WTC11 (cell line): ENCODE measurements at regions of chr19 and their contacts with region 1.

Region 1: DNA sequence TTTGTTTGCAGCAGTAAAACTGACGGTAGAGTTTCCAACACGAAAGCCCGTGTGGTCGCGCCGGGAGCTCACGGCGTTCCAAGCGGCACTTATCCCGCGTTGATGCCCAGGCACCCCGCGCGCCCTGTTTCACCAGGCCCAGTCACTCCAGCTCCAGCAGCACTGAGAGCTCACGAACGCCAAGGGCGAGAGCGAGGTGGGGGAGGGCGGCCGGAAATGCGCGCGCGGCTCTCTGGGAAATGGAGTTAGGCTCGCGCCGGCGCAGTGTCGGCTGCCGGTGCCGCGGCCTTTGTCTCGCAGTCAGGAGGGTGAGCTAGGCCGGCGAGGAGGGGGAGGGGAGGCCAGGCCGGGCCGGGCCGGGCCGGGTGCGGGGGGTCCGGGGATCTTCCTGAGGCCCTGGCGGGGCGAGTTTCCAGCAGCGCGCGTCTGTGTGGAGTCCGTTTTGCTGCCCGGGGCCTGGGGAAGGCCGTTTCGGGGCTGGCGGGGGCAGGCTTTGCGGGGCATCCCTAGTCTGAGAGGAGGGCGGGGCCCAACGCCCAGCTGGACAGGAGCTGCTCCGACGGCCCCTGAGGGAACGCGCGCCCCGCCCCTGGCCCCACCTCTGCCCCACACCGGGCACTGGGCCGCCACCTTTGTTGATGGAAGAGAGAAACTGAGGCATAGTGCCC is at the start of gene ZNF135:
- DNase-seq: peak; percentile 90
- ATAC-seq: peak; percentile 82
- H3K4me3 Mint-ChIP-seq: peak within 1 kb of the TSS; percentile 69
- H3K27ac Mint-ChIP-seq: peak within 1 kb of the TSS; percentile 93
- H3K4me1 Mint-ChIP-seq: peaks cover 26% of the 10 kb centered on the region
- H3K27me3 Mint-ChIP-seq: peaks cover 6% of the 10 kb centered on the region
- CTCF ChIP-seq: no peak
- total RNA-seq, gene ZNF135: 5.6 to 8.0 TPM (median 7.2 TPM) in 3 replicates

Region 2: GRCh38 chr19:57978586-57979289 is 80.4 kb before region 1 on chr19:
- CTCF ChIA-PET with region 1: no interaction called
- POLR2A ChIA-PET with region 1: no interaction called
- DNase-seq: no peak
- ATAC-seq: no peak
- H3K4me3 Mint-ChIP-seq: no peak overlapping the region
- H3K27ac Mint-ChIP-seq: no peak overlapping the region
- H3K4me1 Mint-ChIP-seq: no peaks in the 10 kb centered on the region
- H3K27me3 Mint-ChIP-seq: peaks cover 35% of the 10 kb centered on the region
- CTCF ChIP-seq: no peak

Region 3: DNA sequence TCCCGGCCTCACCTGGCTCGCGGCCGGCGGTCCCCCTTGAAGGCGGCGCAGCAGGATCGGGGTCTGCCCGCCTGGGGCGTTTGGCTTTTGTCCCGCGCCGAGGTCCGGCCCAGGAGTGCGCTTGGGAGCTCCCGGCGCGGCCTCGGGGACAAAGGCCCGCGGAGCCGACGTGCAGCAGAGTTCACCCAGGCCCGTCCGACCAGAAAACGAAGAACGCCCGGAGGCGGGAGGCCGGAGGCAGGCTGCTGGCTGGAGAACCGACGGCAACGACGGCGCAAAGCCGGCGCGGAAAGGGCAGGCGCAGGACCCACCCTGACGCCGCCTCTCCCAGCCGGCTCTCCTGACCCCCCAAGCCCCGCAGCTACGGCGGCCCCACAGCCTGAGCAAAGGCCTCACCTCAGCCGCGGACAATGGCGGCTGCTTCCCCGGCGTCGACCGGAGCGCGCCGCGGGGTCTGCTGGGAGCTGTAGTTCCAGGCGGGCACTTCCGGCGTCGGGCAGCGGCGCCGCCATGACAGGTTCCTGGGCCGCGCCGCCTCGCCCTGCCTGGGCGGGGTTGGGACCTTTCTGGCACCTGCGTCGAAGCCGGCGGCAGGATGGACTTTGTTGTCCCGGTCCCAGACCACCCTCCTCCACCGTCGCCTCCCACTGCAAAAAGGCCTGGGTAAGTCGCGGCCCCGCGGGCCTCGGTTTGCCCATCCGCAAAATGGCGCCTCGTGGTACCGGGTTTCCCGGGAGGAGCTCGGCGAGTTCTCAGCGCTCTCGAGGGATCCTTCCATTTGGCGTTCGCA is 56.6 kb before region 1 on chr19 and contains the start of gene ZNF606:
- CTCF ChIA-PET with region 1: interaction called, 3 read pairs
- POLR2A ChIA-PET with region 1: interaction called, 12 read pairs
- DNase-seq: peak; percentile 86
- ATAC-seq: peak; percentile 90
- H3K4me3 Mint-ChIP-seq: peak within 1 kb of the TSS; percentile 95
- H3K27ac Mint-ChIP-seq: peak within 1 kb of the TSS; percentile 91
- H3K4me1 Mint-ChIP-seq: peaks cover 22% of the 10 kb centered on the region
- H3K27me3 Mint-ChIP-seq: no peaks in the 10 kb centered on the region
- CTCF ChIP-seq: no peak
- total RNA-seq, gene ZNF606: 24.5 to 26.2 TPM (median 26.1 TPM) in 3 replicates

Region 4: GRCh38 chr19:58021541-58022282 is 37.4 kb before region 1 on chr19:
- CTCF ChIA-PET with region 1: interaction called, 25 read pairs
- POLR2A ChIA-PET with region 1: interaction called, 6 read pairs
- DNase-seq: peak; percentile 84
- ATAC-seq: peak; percentile 99
- H3K4me3 Mint-ChIP-seq: no peak overlapping the region
- H3K27ac Mint-ChIP-seq: no peak overlapping the region; the same call in none of the 2 replicates
- H3K4me1 Mint-ChIP-seq: peaks cover 2% of the 10 kb centered on the region
- H3K27me3 Mint-ChIP-seq: peaks cover 28% of the 10 kb centered on the region
- CTCF ChIP-seq: peak; percentile 74

Region 5: GRCh38 chr19:58037927-58038687 is 21.0 kb before region 1 on chr19:
- CTCF ChIA-PET with region 1: interaction called, 48 read pairs
- POLR2A ChIA-PET with region 1: interaction called, 3 read pairs
- DNase-seq: peak; percentile 56
- ATAC-seq: peak; percentile 20
- H3K4me3 Mint-ChIP-seq: peak overlapping the region; percentile 57
- H3K27ac Mint-ChIP-seq: peak overlapping the region; percentile 95
- H3K4me1 Mint-ChIP-seq: peaks cover 32% of the 10 kb centered on the region
- H3K27me3 Mint-ChIP-seq: peaks cover 52% of the 10 kb centered on the region
- CTCF ChIP-seq: no peak

Region 6: GRCh38 chr19:58091251-58091995 is 32.3 kb after region 1 on chr19:
- CTCF ChIA-PET with region 1: interaction called, 14 read pairs
- POLR2A ChIA-PET with region 1: interaction called, 4 read pairs
- DNase-seq: no peak
- ATAC-seq: peak; percentile 77
- H3K4me3 Mint-ChIP-seq: no peak overlapping the region
- H3K27ac Mint-ChIP-seq: peak overlapping the region; percentile 88
- H3K4me1 Mint-ChIP-seq: peaks cover 6% of the 10 kb centered on the region
- H3K27me3 Mint-ChIP-seq: no peaks in the 10 kb centered on the region
- CTCF ChIP-seq: no peak

Region 7: DNA sequence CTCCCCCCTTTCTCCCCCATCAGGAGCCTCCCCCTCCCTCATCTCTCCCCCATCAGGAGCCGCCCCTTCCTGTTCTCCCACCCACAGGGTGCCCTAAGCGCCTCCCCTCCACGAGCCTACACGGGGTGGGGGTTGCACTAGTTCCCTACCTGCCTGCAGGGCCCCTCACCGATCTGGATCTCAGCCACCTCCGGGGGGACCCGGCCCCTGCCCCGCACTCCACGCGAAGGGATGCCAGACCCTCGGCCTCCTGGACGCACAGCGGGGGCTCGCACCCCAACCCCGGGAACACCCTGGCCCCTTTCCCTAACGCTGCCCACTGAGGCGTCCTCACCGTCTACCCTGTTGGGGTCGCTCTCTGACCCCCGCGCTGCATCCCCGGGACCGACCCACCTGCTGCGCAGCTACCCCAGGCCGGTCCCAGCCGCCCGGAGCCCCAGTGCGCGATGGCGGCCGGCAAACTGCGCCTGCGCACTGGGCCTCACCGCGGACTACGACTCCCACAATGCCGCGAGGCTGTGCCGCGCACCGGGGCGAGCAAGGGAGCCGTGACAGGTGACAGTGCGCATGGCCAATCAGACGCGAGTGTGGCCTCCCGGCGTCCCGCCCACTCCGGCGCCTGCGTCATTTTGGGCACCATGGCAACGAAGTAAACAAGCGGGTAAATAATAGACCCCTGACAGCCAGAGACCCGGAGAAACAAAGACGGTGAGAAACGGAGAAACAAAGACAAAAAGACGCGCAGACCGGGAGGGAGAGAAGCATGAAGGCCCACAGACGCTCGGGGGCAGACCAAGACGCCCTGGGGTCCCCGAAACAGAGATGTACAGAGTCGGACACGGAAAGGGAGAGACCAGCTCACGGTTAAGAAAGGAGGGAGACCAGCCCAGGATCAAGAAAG is 38.9 kb after region 1 on chr19 and contains the start of gene ZSCAN18:
- CTCF ChIA-PET with region 1: interaction called, 14 read pairs
- POLR2A ChIA-PET with region 1: interaction called, 16 read pairs
- DNase-seq: peak; percentile 99
- ATAC-seq: peak; percentile 97
- H3K4me3 Mint-ChIP-seq: peak within 1 kb of the TSS; percentile 73
- H3K27ac Mint-ChIP-seq: peak within 1 kb of the TSS; percentile 100
- H3K4me1 Mint-ChIP-seq: peaks cover 12% of the 10 kb centered on the region
- H3K27me3 Mint-ChIP-seq: no peaks in the 10 kb centered on the region
- CTCF ChIP-seq: no peak
- total RNA-seq, gene ZSCAN18: 55.9 to 65.5 TPM (median 64.8 TPM) in 3 replicates